OCI-LY7 (cell line): ENCODE measurements at regions of chr15 and their contacts with region 1.

Region 1: GRCh38 chr15:66700802-66701421 is 1.1 kb upstream of the SMAD6 start:
- DNase-seq: peak; percentile 96
- H3K4me3 ChIP-seq: peak overlapping the region; percentile 77
- H3K27ac ChIP-seq: peak overlapping the region; percentile 84
- H3K4me1 ChIP-seq: peaks cover 38% of the 10 kb centered on the region
- CTCF ChIP-seq: no peak

Region 2: GRCh38 chr15:66293419-66294156 is 407.3 kb before region 1 on chr15 and contains the start of gene DIS3L:
- CTCF ChIA-PET with region 1: no interaction called
- POLR2A ChIA-PET with region 1: no interaction called
- intact Hi-C with region 1: loop called (anchors 5 kb)
- DNase-seq: peak; percentile 87
- H3K4me3 ChIP-seq: peak within 1 kb of the TSS; percentile 69
- H3K27ac ChIP-seq: peak within 1 kb of the TSS; percentile 88
- H3K4me1 ChIP-seq: peaks cover 44% of the 10 kb centered on the region
- CTCF ChIP-seq: no peak
- total RNA-seq, gene DIS3L: 33.9 and 41.2 TPM in 2 replicates

Region 3: DNA sequence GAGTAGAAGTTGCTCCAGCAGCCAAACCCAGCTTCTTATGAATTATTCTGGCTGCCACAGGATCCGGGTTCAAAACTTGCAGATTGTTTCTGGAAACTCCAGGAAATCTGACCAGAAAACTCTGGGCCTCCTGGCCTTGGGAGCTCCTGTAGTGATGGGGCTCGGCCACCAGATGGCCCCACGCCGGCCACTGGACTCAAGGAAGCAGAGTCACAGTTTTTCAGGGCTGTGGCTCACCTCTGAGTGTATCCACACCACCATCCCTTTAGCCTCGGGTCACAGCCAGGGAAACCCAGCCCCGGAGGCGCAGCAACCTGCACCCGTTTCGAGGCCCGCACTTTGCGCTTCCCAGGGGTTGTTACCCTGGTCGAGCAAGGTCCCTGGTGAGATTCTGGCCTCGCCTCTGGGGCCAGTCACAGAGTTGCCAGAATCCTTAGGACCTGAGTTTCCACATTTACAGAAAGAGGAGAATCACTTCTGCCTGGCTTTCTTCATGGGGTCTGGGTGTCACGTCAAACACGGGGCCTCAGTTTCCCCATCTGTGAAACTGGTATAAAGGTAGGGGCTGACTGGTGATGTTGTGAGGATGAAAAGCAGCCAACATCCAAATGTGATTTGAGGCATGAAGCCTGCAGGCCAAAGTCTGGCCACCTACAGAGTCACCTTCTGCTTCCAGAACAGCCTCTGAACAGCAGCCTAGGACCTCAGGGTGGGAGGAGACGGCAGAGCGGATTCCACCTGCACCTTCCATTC is 81.6 kb before region 1 on chr15:
- CTCF ChIA-PET with region 1: no interaction called
- POLR2A ChIA-PET with region 1: interaction called, 3 read pairs
- intact Hi-C with region 1: loop called (anchors 1 kb)
- DNase-seq: peak; percentile 74
- H3K4me3 ChIP-seq: no peak overlapping the region
- H3K27ac ChIP-seq: no peak overlapping the region
- H3K4me1 ChIP-seq: no peaks in the 10 kb centered on the region
- CTCF ChIP-seq: peak; percentile 90

Region 4: GRCh38 chr15:66774001-66774814 is 73.3 kb after region 1 on chr15:
- CTCF ChIA-PET with region 1: no interaction called
- POLR2A ChIA-PET with region 1: no interaction called
- intact Hi-C with region 1: loop called (anchors 2 kb)
- DNase-seq: peak; percentile 71
- H3K4me3 ChIP-seq: no peak overlapping the region
- H3K27ac ChIP-seq: no peak overlapping the region
- H3K4me1 ChIP-seq: no peaks in the 10 kb centered on the region
- CTCF ChIP-seq: peak; percentile 88

Region 5: DNA sequence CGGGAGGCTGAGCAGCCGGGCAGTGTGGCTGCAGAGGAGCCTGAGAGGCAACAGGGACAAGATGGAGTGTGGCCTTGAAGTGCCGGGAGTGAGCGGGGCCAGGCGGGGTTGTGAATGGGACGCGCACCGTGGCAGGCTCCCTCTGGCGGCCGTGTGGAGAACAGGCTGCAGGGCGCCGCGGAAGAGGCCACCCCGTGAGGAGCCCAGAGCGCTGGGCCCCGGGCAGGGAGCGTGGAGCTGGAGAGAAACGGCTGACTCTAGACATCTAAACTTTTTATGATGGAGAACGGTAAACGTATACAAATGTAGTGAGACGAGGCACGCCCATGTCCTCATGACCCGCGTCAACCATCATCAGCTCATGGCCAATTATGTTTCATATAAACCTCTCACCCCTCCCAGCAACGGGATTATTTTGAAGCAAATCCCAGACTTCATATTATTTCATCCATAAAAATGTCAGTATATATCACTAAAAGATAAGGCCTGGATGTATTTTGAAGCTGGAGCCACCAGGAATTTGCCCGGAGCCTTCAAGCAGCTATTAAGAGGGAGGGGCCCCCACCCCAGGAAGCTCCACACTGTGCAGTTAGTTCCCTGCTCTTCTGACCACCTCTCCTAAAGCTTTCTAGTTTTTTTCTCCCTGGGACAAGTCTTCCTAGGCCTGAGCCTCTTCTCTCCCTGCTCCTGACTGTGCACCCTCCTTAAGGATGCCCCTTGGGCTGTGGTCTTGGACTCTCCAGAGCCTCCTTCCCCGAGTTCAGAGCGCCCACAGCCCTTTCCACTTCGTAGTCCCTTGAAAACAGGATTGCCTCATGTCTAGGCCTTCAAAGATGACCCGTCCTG is 150.5 kb after region 1 on chr15:
- CTCF ChIA-PET with region 1: interaction called, 4 read pairs
- POLR2A ChIA-PET with region 1: interaction called, 4 read pairs
- intact Hi-C with region 1: loop called (anchors 5 kb)
- DNase-seq: peak; percentile 83
- H3K4me3 ChIP-seq: no peak overlapping the region
- H3K27ac ChIP-seq: no peak overlapping the region
- H3K4me1 ChIP-seq: peaks cover 3% of the 10 kb centered on the region
- CTCF ChIP-seq: peak; percentile 96